ENCODE measurements at regions of chr12 and their contacts with region 1.

Region 1: DNA sequence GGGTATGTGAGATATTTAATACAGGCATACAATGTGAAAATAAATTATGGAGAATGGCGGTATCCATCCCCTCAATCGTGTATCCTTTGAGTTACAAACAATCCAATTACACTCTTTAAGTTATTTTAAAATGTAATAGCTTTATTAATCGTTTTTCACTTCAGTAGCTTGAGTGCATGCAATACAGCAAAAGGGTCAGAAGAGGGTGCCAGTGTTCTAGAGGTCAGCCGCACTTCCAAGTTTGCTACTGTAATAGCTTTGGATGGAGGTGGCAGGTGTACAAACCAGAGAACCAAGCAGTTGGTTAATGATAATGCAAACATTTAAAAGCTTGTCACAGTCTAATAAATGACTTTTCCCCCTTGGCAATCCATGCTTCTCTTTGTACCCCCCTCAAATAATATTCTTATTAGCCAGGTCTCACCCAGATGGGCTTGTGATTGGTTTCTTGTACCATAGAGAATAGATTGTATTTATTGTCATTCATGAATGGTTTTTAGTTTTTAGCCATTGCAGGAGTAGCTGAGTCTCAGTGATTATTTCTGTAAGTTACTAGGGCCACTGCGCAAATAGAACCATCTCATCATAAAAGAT is 127.0 kb downstream of the ERC1 start:
- DNase-seq: peak; percentile 80
- ATAC-seq: peak; percentile 88
- H3K4me3 ChIP-seq: no peak overlapping the region
- H3K4me3 Mint-ChIP-seq: no peak overlapping the region
- H3K27ac ChIP-seq: no peak overlapping the region
- H3K27ac Mint-ChIP-seq: no peak overlapping the region
- H3K4me1 ChIP-seq: no peaks in the 10 kb centered on the region
- H3K4me1 Mint-ChIP-seq: no peaks in the 10 kb centered on the region
- H3K27me3 ChIP-seq: no peaks in the 10 kb centered on the region
- H3K27me3 Mint-ChIP-seq: no peaks in the 10 kb centered on the region
- CTCF ChIP-seq: peak; percentile 98

Region 2: GRCh38 chr12:1130164-1130563 is 12.1 kb after region 1 on chr12:
- CTCF ChIA-PET with region 1: interaction called, 10 read pairs
- POLR2A ChIA-PET with region 1: no interaction called
- intact Hi-C with region 1: no loop called
- DNase-seq: no peak
- ATAC-seq: no peak
- H3K4me3 ChIP-seq: no peak overlapping the region
- H3K4me3 Mint-ChIP-seq: no peak overlapping the region
- H3K27ac ChIP-seq: peak overlapping the region in 1 of 2 donors; percentile 14
- H3K27ac Mint-ChIP-seq: no peak overlapping the region
- H3K4me1 ChIP-seq: no peaks in the 10 kb centered on the region
- H3K4me1 Mint-ChIP-seq: no peaks in the 10 kb centered on the region
- H3K27me3 ChIP-seq: no peaks in the 10 kb centered on the region
- H3K27me3 Mint-ChIP-seq: no peaks in the 10 kb centered on the region
- CTCF ChIP-seq: no peak

Region 3: DNA sequence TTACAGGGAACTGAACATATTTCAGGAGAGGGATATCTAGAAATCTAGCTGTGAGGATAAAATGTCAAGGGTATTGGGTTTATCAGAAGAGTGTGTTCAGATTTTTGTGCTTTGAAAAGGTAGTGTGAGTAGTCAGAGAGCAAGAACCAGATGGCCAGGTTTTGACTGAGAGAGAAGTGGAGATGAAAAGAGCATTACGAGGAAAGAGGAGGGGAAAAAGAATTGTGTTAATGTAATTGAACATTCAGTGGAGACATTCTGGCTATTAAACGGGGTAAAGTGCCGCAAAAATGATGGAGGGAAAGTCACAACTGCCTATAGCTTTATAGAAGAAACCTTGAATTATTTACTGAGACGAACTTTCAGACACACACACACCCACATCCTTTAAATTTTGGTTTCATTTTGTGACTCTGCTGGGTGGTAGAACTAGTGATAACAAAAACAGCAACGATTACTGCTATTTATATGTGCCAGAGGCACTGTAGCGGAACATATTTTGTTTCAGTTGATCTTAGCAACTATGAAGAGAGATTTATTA is 86.6 kb after region 1 on chr12:
- CTCF ChIA-PET with region 1: interaction called, 12 read pairs
- POLR2A ChIA-PET with region 1: no interaction called
- intact Hi-C with region 1: loop called (anchors 5 kb)
- DNase-seq: peak; percentile 74
- ATAC-seq: peak; percentile 87
- H3K4me3 ChIP-seq: peak overlapping the region; percentile 42 to 85 (median 63)
- H3K4me3 Mint-ChIP-seq: no peak overlapping the region
- H3K27ac ChIP-seq: peak overlapping the region; percentile 86 to 94
- H3K27ac Mint-ChIP-seq: no peak overlapping the region
- H3K4me1 ChIP-seq: peaks cover 23 to 48% of the 10 kb centered on the region in 2 donors
- H3K4me1 Mint-ChIP-seq: peaks cover 28% of the 10 kb centered on the region
- H3K27me3 ChIP-seq: no peaks in the 10 kb centered on the region
- H3K27me3 Mint-ChIP-seq: no peaks in the 10 kb centered on the region
- CTCF ChIP-seq: no peak

Region 4: GRCh38 chr12:1583421-1584078 is 465.5 kb after region 1 on chr12:
- CTCF ChIA-PET with region 1: interaction called, 256 read pairs
- POLR2A ChIA-PET with region 1: interaction called, 4 read pairs
- intact Hi-C with region 1: loop called (anchors 1 kb)
- DNase-seq: peak; percentile 86
- ATAC-seq: peak; percentile 93
- H3K4me3 ChIP-seq: peak overlapping the region in 2 of 5 experiments; percentile 12 to 28
- H3K4me3 Mint-ChIP-seq: peak overlapping the region; percentile 79
- H3K27ac ChIP-seq: no peak overlapping the region
- H3K27ac Mint-ChIP-seq: no peak overlapping the region
- H3K4me1 ChIP-seq: peaks cover 6 to 7% of the 10 kb centered on the region in 2 donors
- H3K4me1 Mint-ChIP-seq: peaks cover 19% of the 10 kb centered on the region
- H3K27me3 ChIP-seq: no peaks in the 10 kb centered on the region
- H3K27me3 Mint-ChIP-seq: no peaks in the 10 kb centered on the region
- CTCF ChIP-seq: peak; percentile 92

Region 5: DNA sequence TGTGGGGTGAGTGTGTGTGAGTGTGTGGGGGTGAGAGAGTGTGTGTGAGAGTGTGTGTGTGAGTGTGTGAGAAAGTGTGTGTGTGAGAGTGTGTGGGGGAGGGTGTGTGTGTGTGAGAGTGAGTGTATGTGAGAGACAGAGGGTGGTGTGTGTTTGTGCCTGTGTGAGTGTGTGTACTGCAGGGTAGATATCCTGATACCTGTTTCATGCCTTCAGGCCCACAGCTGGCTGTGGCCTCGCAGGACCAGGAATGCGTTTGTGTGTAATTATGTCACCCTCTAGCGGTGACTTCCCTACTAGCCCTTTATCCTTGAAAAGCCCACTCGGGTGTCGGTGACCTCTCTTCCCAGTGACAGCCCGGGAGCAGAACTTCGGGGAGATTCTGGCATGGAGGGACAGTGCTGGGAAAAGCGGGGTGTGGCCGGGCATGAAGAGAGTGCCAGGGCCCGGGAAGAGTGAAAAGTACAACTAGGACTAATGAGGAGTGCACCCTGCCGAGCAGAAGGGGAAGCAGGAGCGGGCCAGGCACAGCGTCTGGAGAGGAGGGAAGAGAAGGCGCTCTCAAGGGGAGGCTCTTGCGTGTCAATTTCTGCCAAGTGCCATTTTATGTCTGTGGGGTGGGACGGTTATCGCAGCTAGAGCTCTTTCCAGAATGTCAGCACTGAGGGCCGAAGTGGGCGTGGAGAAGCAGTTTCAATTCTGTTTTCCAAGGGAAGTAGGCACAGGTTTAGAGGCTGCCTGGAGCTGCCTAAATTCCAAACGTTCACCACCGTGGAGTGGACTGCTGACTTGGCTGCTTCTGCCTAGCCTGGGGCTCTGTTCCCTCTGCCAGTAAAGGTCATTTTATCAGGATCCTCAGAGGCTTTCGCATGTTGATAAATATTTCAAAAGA is 487.3 kb after region 1 on chr12:
- CTCF ChIA-PET with region 1: interaction called, 94 read pairs
- POLR2A ChIA-PET with region 1: interaction called, 6 read pairs
- intact Hi-C with region 1: loop called (anchors 1 kb)
- DNase-seq: peak; percentile 83
- ATAC-seq: peak; percentile 61
- H3K4me3 ChIP-seq: peak overlapping the region; percentile 37 to 63 (median 44)
- H3K4me3 Mint-ChIP-seq: peak overlapping the region; percentile 97
- H3K27ac ChIP-seq: no peak overlapping the region
- H3K27ac Mint-ChIP-seq: peak overlapping the region; percentile 66
- H3K4me1 ChIP-seq: peaks cover 11 to 27% of the 10 kb centered on the region in 2 donors
- H3K4me1 Mint-ChIP-seq: peaks cover 29% of the 10 kb centered on the region
- H3K27me3 ChIP-seq: no peaks in the 10 kb centered on the region
- H3K27me3 Mint-ChIP-seq: peaks cover 3% of the 10 kb centered on the region
- CTCF ChIP-seq: peak; percentile 72

Region 6: DNA sequence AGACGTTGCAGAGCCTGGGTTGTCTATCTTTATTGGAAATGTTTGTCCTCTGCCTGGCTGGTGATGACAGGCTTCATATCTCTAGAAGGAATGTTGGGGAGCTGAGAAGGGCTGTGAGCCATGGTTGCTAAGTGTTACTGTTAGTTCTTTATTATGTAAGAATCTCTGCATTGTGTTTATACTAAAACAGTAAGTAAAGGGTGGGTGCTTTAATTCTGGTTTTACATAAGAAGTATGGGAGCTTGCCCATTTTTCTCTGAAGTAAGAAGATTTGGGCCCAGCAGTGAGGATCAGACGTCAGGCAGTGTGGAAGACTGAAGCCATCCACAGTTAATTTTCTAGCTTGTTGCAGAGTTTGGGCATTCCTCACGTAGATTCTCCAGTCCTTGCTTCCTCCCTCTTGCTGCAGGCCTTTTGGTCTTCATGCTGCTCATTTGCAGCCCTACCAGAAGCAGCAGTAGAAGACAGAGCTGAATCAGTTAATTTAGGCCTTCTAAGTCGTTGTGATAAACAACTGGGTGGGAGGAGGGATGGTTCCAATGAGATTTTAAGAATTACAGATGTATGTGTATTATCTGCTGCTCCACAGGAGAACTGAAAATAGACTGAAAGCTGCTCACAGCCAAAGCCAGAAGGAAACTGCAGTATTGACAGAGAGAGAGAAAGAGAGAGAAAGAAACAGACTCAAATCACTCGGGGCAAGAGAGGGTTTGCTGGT is 532.4 kb after region 1 on chr12:
- CTCF ChIA-PET with region 1: interaction called, 21 read pairs
- POLR2A ChIA-PET with region 1: no interaction called
- intact Hi-C with region 1: no loop called
- DNase-seq: no peak
- ATAC-seq: no peak
- H3K4me3 ChIP-seq: no peak overlapping the region
- H3K4me3 Mint-ChIP-seq: no peak overlapping the region
- H3K27ac ChIP-seq: no peak overlapping the region
- H3K27ac Mint-ChIP-seq: no peak overlapping the region
- H3K4me1 ChIP-seq: peaks cover 0 to 19% of the 10 kb centered on the region in 2 donors
- H3K4me1 Mint-ChIP-seq: peaks cover 11% of the 10 kb centered on the region
- H3K27me3 ChIP-seq: no peaks in the 10 kb centered on the region
- H3K27me3 Mint-ChIP-seq: peaks cover 31% of the 10 kb centered on the region
- CTCF ChIP-seq: no peak

Region 7: GRCh38 chr12:2431810-2432209 is 1313.7 kb after region 1 on chr12:
- CTCF ChIA-PET with region 1: no interaction called
- POLR2A ChIA-PET with region 1: no interaction called
- intact Hi-C with region 1: no loop called
- DNase-seq: no peak
- ATAC-seq: no peak
- H3K4me3 ChIP-seq: no peak overlapping the region
- H3K4me3 Mint-ChIP-seq: no peak overlapping the region
- H3K27ac ChIP-seq: no peak overlapping the region
- H3K27ac Mint-ChIP-seq: no peak overlapping the region
- H3K4me1 ChIP-seq: no peaks in the 10 kb centered on the region
- H3K4me1 Mint-ChIP-seq: no peaks in the 10 kb centered on the region
- H3K27me3 ChIP-seq: no peaks in the 10 kb centered on the region
- H3K27me3 Mint-ChIP-seq: peaks cover 10% of the 10 kb centered on the region
- CTCF ChIP-seq: no peak

Measured in B cell (primary cell).